Right ventricle myocardium inferior (tissue), 1 donor: ENCODE measurements at regions of chr10 and their contacts with region 1.

Region 1: GRCh38 chr10:102399217-102400089 is 3.9 kb downstream of the NFKB2 start:
- DNase-seq: peak; percentile 97
- ATAC-seq: peak; percentile 79

Region 2: GRCh38 chr10:102583435-102584417 is 184.3 kb after region 1 on chr10:
- intact Hi-C with region 1: loop called (anchors 2 kb)
- DNase-seq: peak; percentile 89
- ATAC-seq: peak; percentile 90